IMR-90 (cell line): ENCODE measurements at regions of chr4 and their contacts with region 1.

Region 1: GRCh38 chr4:148441986-148442831 is at the start of gene NR3C2:
- DNase-seq: peak; percentile 96
- ATAC-seq: peak; percentile 96
- H3K4me3 ChIP-seq: peak within 1 kb of the TSS; percentile 66
- H3K27ac ChIP-seq: no peak within 1 kb of the TSS
- H3K4me1 ChIP-seq: no peaks in the 10 kb centered on the region
- H3K27me3 ChIP-seq: peaks cover 36% of the 10 kb centered on the region
- CTCF ChIP-seq: no peak
- POLR2A ChIP-seq: peak; percentile 56; the same call in 1 of the 2 replicates
- RAD21 ChIP-seq: no peak
- total RNA-seq, gene NR3C2: 1.9 and 2.3 TPM in 2 replicates

Region 2: DNA sequence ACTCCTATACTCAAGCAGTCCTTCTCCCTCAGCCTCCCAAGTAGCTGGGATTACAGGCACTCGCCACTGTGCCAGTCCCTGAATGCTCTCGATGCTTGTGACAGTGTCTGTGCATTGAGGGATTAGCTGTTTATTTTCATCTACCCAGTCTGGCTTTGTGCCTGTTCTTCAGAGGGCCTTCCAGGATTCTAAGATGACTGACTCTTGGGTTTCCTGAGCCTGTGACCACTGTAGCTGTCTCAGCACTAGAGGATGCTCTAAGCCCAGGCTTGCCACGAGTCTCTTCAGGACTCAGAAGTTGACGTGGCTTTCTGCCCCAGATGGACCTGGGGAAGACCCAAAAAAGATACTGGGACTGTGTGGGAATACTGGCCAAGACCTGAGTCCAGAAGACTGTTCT is 508.9 kb before region 1 on chr4:
- CTCF ChIA-PET with region 1: no interaction called
- POLR2A ChIA-PET with region 1: no interaction called
- dilution Hi-C with region 1: no loop called
- in situ Hi-C with region 1: no loop called
- intact Hi-C with region 1: loop called (anchors 2 kb)
- DNase-seq: peak; percentile 59
- ATAC-seq: peak; percentile 67
- H3K4me3 ChIP-seq: no peak overlapping the region
- H3K27ac ChIP-seq: no peak overlapping the region
- H3K4me1 ChIP-seq: peaks cover 4% of the 10 kb centered on the region
- H3K27me3 ChIP-seq: no peaks in the 10 kb centered on the region
- CTCF ChIP-seq: peak; percentile 53
- POLR2A ChIP-seq: no peak
- RAD21 ChIP-seq: peak; percentile 62

Region 3: GRCh38 chr4:147984065-147984777 is 458.0 kb before region 1 on chr4:
- CTCF ChIA-PET with region 1: no interaction called
- POLR2A ChIA-PET with region 1: no interaction called
- dilution Hi-C with region 1: no loop called
- in situ Hi-C with region 1: no loop called
- intact Hi-C with region 1: loop called (anchors 1 kb)
- DNase-seq: peak; percentile 54
- ATAC-seq: peak; percentile 85
- H3K4me3 ChIP-seq: no peak overlapping the region
- H3K27ac ChIP-seq: no peak overlapping the region
- H3K4me1 ChIP-seq: peaks cover 3% of the 10 kb centered on the region
- H3K27me3 ChIP-seq: no peaks in the 10 kb centered on the region
- CTCF ChIP-seq: peak; percentile 73
- POLR2A ChIP-seq: no peak
- RAD21 ChIP-seq: peak; percentile 68

Region 4: GRCh38 chr4:148542922-148543623 is 100.9 kb after region 1 on chr4:
- CTCF ChIA-PET with region 1: no interaction called
- POLR2A ChIA-PET with region 1: no interaction called
- dilution Hi-C with region 1: no loop called
- in situ Hi-C with region 1: no loop called
- intact Hi-C with region 1: no loop called
- DNase-seq: peak; percentile 23
- ATAC-seq: no peak
- H3K4me3 ChIP-seq: no peak overlapping the region
- H3K27ac ChIP-seq: no peak overlapping the region
- H3K4me1 ChIP-seq: no peaks in the 10 kb centered on the region
- H3K27me3 ChIP-seq: no peaks in the 10 kb centered on the region
- CTCF ChIP-seq: no peak
- POLR2A ChIP-seq: no peak
- RAD21 ChIP-seq: no peak

Region 5: DNA sequence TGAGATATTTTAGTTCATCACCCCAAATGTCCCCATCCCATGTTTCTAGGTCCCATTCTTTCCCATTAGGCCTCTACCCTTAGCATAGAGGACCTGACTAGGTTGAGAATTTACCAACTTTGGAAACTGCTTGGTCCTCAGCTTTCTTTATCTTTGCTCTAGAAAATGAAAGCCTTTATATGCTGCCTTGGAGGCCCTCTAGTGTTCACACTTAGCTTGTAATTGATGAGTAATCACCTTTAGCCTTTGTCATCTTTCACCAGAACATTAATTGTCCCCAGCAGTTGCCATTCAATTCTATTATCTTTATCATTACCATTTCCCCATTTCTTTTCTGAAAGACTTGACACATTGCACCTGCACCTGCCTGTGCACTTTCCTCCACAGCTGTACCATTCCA is 589.2 kb after region 1 on chr4:
- CTCF ChIA-PET with region 1: no interaction called
- POLR2A ChIA-PET with region 1: no interaction called
- dilution Hi-C with region 1: no loop called
- in situ Hi-C with region 1: no loop called
- intact Hi-C with region 1: loop called (anchors 5 kb)
- DNase-seq: peak; percentile 19
- ATAC-seq: no peak
- H3K4me3 ChIP-seq: no peak overlapping the region
- H3K27ac ChIP-seq: no peak overlapping the region
- H3K4me1 ChIP-seq: peaks cover 2% of the 10 kb centered on the region; the same call in 1 of the 2 replicates
- H3K27me3 ChIP-seq: no peaks in the 10 kb centered on the region
- CTCF ChIP-seq: peak; percentile 43
- POLR2A ChIP-seq: no peak
- RAD21 ChIP-seq: peak; percentile 54

Region 6: GRCh38 chr4:149897783-149898182 is 1455.6 kb after region 1 on chr4:
- CTCF ChIA-PET with region 1: no interaction called
- POLR2A ChIA-PET with region 1: no interaction called
- dilution Hi-C with region 1: no loop called
- in situ Hi-C with region 1: no loop called
- intact Hi-C with region 1: loop called (anchors 5 kb)
- DNase-seq: peak; percentile 26
- ATAC-seq: peak; percentile 77
- H3K4me3 ChIP-seq: no peak overlapping the region
- H3K27ac ChIP-seq: no peak overlapping the region
- H3K4me1 ChIP-seq: no peaks in the 10 kb centered on the region
- H3K27me3 ChIP-seq: no peaks in the 10 kb centered on the region
- CTCF ChIP-seq: peak; percentile 59
- POLR2A ChIP-seq: no peak
- RAD21 ChIP-seq: peak; percentile 73